PC-9 (cell line): ENCODE measurements at regions of chr6 and their contacts with region 1.

Region 1: GRCh38 chr6:31493875-31494694 is 3.9 kb upstream of the MICB start:
- DNase-seq: peak; percentile 54 to 84
- H3K4me3 ChIP-seq: peak overlapping the region; percentile 67
- H3K27ac ChIP-seq: peak overlapping the region; percentile 47; the same call in 1 of the 2 replicates
- H3K4me1 ChIP-seq: peaks cover 22% of the 10 kb centered on the region
- H3K27me3 ChIP-seq: no peaks in the 10 kb centered on the region
- CTCF ChIP-seq: peak; percentile 87

Region 2: GRCh38 chr6:31525932-31526591 is 32.0 kb after region 1 on chr6:
- CTCF ChIA-PET with region 1: interaction called, 3 read pairs
- POLR2A ChIA-PET with region 1: interaction called, 4 read pairs
- intact Hi-C with region 1: loop called (anchors 5 kb)
- DNase-seq: no peak
- H3K4me3 ChIP-seq: no peak overlapping the region
- H3K27ac ChIP-seq: no peak overlapping the region
- H3K4me1 ChIP-seq: 0 out of 2 replicates have a peak, but pooled peaks cover 7% of the 10 kb centered on the region
- H3K27me3 ChIP-seq: no peaks in the 10 kb centered on the region
- CTCF ChIP-seq: no peak

Region 3: DNA sequence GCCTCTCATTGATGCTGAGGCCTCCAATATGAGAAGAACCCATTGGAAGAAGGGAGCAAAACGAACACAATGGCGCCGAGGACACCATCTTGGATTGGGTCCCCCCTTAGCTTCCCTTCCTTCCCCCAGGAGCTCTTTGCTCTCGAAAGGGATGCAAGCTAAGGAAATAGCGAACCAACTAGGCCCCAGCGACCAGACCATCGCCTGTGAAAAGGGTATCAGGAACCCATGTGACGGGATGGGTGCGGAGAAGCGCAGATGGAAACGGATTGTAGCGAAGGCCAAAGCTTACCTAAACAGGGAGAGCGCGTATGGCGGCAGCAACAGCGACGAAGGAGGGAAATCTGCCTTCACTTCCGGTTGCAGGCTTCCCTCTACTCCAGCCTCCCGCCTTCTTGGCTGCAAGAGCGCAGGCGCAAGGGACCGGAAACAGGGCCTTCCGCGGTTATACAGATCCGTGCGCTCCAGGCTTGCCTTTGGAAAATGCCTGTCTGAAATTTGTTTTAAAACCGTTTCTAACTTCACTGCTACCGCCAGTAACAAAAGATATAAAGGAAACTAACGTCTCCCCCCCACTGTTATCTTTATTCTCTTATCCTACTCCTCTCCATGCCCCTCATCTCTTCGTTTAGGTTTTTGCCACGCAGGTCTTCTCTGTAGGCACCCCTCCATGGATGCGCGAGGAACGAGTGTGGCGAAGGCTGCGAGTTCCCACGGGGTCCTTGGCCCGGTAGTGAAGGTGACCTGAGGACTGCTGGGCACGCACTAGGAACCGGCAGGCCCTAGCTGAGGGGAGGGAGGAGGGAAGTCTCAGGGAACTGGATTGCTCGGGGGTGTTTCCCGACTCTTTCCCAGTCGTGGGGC is 47.8 kb after region 1 on chr6 and contains the start of gene DDX39B:
- CTCF ChIA-PET with region 1: interaction called, 13 read pairs
- POLR2A ChIA-PET with region 1: interaction called, 12 read pairs
- intact Hi-C with region 1: loop called (anchors 1 kb)
- DNase-seq: peak; percentile 89 to 90
- H3K4me3 ChIP-seq: peak within 1 kb of the TSS; percentile 75
- H3K27ac ChIP-seq: peak within 1 kb of the TSS; percentile 95
- H3K4me1 ChIP-seq: peaks cover 29% of the 10 kb centered on the region
- H3K27me3 ChIP-seq: no peaks in the 10 kb centered on the region
- CTCF ChIP-seq: no peak
- total RNA-seq, gene DDX39B: 383 and 436 TPM in 2 replicates

Region 4: GRCh38 chr6:31597006-31597405 is 102.9 kb after region 1 on chr6:
- CTCF ChIA-PET with region 1: interaction called, 6 read pairs
- POLR2A ChIA-PET with region 1: no interaction called
- intact Hi-C with region 1: loop called (anchors 1 kb)
- DNase-seq: no peak
- H3K4me3 ChIP-seq: no peak overlapping the region
- H3K27ac ChIP-seq: no peak overlapping the region
- H3K4me1 ChIP-seq: no peaks in the 10 kb centered on the region
- H3K27me3 ChIP-seq: no peaks in the 10 kb centered on the region
- CTCF ChIP-seq: peak; percentile 53

Region 5: GRCh38 chr6:32819729-32820128 is 1325.6 kb after region 1 on chr6:
- CTCF ChIA-PET with region 1: no interaction called
- POLR2A ChIA-PET with region 1: interaction called, 15 read pairs
- intact Hi-C with region 1: no loop called
- DNase-seq: peak; percentile 56 to 85
- H3K4me3 ChIP-seq: no peak overlapping the region
- H3K27ac ChIP-seq: peak overlapping the region; percentile 80
- H3K4me1 ChIP-seq: peaks cover 32% of the 10 kb centered on the region
- H3K27me3 ChIP-seq: no peaks in the 10 kb centered on the region
- CTCF ChIP-seq: no peak